ENCODE measurements at regions of chr1 and their contacts with region 1.

Region 1: GRCh38 chr1:151399890-151400495 is 620 bp downstream of the PSMB4 start:
- DNase-seq: peak in 3 of 9 donors; percentile 2 to 10 (median 10)
- ATAC-seq: peak; percentile 15
- H3K4me3 ChIP-seq: peak overlapping the region; percentile 95
- H3K4me3 Mint-ChIP-seq: peak overlapping the region; percentile 84 to 99 (median 94)
- H3K27ac ChIP-seq: peak overlapping the region; percentile 98
- H3K27ac Mint-ChIP-seq: peak overlapping the region; percentile 94 to 99 (median 98)
- H3K4me1 ChIP-seq: peaks cover 13 to 14% of the 10 kb centered on the region in 2 donors
- H3K4me1 Mint-ChIP-seq: peaks cover 11 to 34% (median 28%) of the 10 kb centered on the region in 7 donors
- H3K27me3 ChIP-seq: no peaks in the 10 kb centered on the region
- H3K27me3 Mint-ChIP-seq: peaks cover 0 to 12% (median 0%) of the 10 kb centered on the region in 5 donors

Region 2: GRCh38 chr1:151189638-151190445 is 210.2 kb before region 1 on chr1 and contains the start of gene VPS72:
- CTCF ChIA-PET with region 1: no interaction called
- POLR2A ChIA-PET with region 1: no interaction called
- intact Hi-C with region 1: loop called in 1 of 2 experiments (anchors 1 kb)
- DNase-seq: peak; percentile 57 to 90 (median 85)
- ATAC-seq: peak; percentile 98
- H3K4me3 ChIP-seq: peak within 1 kb of the TSS; percentile 80
- H3K4me3 Mint-ChIP-seq: peak within 1 kb of the TSS; percentile 91 to 99 (median 98)
- H3K27ac ChIP-seq: peak within 1 kb of the TSS; percentile 78
- H3K27ac Mint-ChIP-seq: peak within 1 kb of the TSS; percentile 91 to 98 (median 97)
- H3K4me1 ChIP-seq: peaks cover 16% of the 10 kb centered on the region in 2 donors
- H3K4me1 Mint-ChIP-seq: peaks cover 23 to 47% (median 35%) of the 10 kb centered on the region in 7 donors
- H3K27me3 ChIP-seq: no peaks in the 10 kb centered on the region
- H3K27me3 Mint-ChIP-seq: peaks cover 0 to 8% (median 0%) of the 10 kb centered on the region in 5 donors
- total RNA-seq, gene VPS72: 35.1 to 82.0 (median 63.9) TPM

Region 3: DNA sequence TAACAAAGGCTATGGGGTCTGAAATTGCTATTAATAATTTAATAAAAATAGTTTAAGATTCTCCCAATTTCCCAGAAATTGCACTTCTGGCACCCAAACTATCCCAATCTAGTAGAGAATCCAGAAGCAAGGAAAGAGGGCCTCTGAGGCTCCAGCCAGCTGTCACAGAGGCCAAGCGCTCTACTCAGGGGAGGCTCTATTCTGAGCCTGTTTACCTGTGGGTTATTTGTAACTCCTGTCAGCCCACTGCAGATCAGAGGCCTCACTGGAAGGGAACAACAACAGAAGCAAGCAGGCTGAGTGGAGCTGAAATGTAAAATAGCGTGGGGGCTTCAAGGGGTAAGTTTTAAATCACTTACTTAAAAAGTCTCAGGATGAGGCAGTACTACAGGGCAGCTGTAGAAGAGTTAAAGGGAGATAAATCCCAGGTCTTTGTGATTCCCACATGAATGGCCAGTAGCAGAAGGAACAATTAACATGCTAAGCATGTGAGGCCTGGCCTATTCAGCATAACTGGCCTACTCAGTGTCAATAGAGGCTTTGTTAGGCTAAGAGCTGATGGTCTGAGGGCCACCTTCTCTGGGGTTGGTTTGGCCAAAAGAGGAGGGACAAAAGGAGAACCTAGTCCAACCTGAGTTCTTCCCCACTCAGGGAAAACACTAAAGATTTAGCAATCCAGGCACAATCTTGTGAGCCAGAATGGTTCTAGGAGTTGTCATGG is 105.1 kb before region 1 on chr1:
- CTCF ChIA-PET with region 1: no interaction called
- POLR2A ChIA-PET with region 1: no interaction called
- intact Hi-C with region 1: loop called in 1 of 2 experiments (anchors 5 kb)
- DNase-seq: no peak
- ATAC-seq: no peak
- H3K4me3 ChIP-seq: no peak overlapping the region
- H3K4me3 Mint-ChIP-seq: no peak overlapping the region
- H3K27ac ChIP-seq: no peak overlapping the region
- H3K27ac Mint-ChIP-seq: peak overlapping the region in 2 of 9 donors; percentile 32 to 52
- H3K4me1 ChIP-seq: no peaks in the 10 kb centered on the region
- H3K4me1 Mint-ChIP-seq: peaks cover 0 to 14% (median 3%) of the 10 kb centered on the region in 7 donors
- H3K27me3 ChIP-seq: no peaks in the 10 kb centered on the region
- H3K27me3 Mint-ChIP-seq: no peaks in the 10 kb centered on the region

Region 4: DNA sequence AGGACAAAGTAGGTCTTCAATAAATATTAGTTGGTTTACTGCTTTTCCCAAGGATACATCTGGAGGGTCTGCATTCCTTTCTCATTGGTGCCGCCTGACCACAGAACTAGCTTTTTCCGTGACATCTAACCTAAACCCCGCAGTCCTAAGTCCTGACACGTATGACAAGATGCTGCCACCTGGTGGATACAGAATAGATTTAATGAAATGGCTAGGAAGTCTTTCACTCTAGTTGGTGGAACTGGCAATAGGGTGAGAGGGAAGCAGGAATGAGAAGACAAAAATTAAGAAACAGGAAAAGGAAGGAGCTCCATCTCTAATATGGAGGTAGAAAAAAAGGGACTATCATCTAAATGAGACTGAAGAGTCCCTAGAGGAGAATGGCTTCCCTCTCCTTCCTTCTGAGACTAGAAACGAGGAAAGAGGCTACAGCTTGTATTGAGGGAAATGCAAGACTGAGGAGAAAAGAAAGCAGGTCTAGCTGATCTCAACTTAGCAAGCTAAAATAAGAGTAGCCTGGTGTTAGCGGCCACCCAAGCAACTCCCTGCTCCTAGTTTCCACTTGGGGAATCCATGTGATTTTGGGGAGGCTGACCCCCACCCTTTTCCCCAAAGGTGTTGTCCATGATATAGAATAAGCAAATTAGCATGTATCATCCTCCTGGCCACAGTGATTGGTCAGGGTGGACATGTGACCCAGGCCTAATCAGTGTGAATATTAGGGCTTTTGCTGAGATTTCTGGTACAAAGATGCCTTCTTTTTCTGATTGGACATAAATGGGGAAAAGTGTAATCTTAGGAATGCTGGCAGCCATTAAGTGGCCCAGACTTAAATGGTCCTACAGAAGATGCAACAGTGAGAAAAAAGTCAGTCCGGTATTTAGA is 58.9 kb before region 1 on chr1:
- CTCF ChIA-PET with region 1: interaction called, 3 read pairs
- POLR2A ChIA-PET with region 1: interaction called, 5 read pairs
- intact Hi-C with region 1: loop called in 1 of 2 experiments (anchors 1 kb)
- DNase-seq: peak in 8 of 9 donors; percentile 46 to 75 (median 68)
- ATAC-seq: peak; percentile 92
- H3K4me3 ChIP-seq: no peak overlapping the region
- H3K4me3 Mint-ChIP-seq: peak overlapping the region in 1 of 10 donors; percentile 22
- H3K27ac ChIP-seq: peak overlapping the region; percentile 5
- H3K27ac Mint-ChIP-seq: peak overlapping the region; percentile 1 to 70 (median 52)
- H3K4me1 ChIP-seq: peaks cover 6 to 7% of the 10 kb centered on the region in 2 donors
- H3K4me1 Mint-ChIP-seq: peaks cover 20 to 39% (median 28%) of the 10 kb centered on the region in 7 donors
- H3K27me3 ChIP-seq: no peaks in the 10 kb centered on the region
- H3K27me3 Mint-ChIP-seq: no peaks in the 10 kb centered on the region

Region 5: GRCh38 chr1:151416231-151416904 is 16.4 kb after region 1 on chr1:
- CTCF ChIA-PET with region 1: no interaction called
- POLR2A ChIA-PET with region 1: interaction called, 36 read pairs
- intact Hi-C with region 1: no loop called
- DNase-seq: no peak
- ATAC-seq: no peak
- H3K4me3 ChIP-seq: no peak overlapping the region
- H3K4me3 Mint-ChIP-seq: no peak overlapping the region
- H3K27ac ChIP-seq: no peak overlapping the region
- H3K27ac Mint-ChIP-seq: no peak overlapping the region
- H3K4me1 ChIP-seq: no peaks in the 10 kb centered on the region
- H3K4me1 Mint-ChIP-seq: peaks cover 0 to 5% (median 0%) of the 10 kb centered on the region in 7 donors
- H3K27me3 ChIP-seq: no peaks in the 10 kb centered on the region
- H3K27me3 Mint-ChIP-seq: no peaks in the 10 kb centered on the region

Measured in naive thymus-derived CD4-positive, alpha-beta T cell (primary cell).